ENCODE measurements at regions of chrX and their contacts with region 1.

Region 1: GRCh38 chrX:48648336-48648751 is 35.3 kb upstream of the WAS start:
- DNase-seq: peak in 33 of 35 experiments; percentile 1 to 68 (median 22)
- ATAC-seq: peak in 3 of 4 experiments; percentile 60 to 78 (median 75)
- H3K4me3 ChIP-seq: no peak overlapping the region
- H3K4me3 Mint-ChIP-seq: no peak overlapping the region
- H3K27ac ChIP-seq: no peak overlapping the region
- H3K27ac Mint-ChIP-seq: peak overlapping the region; percentile 74
- H3K4me1 ChIP-seq: no peaks in the 10 kb centered on the region
- H3K4me1 Mint-ChIP-seq: peaks cover 0 to 11% (median 6%) of the 10 kb centered on the region in 3 donors
- H3K27me3 ChIP-seq: no peaks in the 10 kb centered on the region
- H3K27me3 Mint-ChIP-seq: no peaks in the 10 kb centered on the region

Region 2: DNA sequence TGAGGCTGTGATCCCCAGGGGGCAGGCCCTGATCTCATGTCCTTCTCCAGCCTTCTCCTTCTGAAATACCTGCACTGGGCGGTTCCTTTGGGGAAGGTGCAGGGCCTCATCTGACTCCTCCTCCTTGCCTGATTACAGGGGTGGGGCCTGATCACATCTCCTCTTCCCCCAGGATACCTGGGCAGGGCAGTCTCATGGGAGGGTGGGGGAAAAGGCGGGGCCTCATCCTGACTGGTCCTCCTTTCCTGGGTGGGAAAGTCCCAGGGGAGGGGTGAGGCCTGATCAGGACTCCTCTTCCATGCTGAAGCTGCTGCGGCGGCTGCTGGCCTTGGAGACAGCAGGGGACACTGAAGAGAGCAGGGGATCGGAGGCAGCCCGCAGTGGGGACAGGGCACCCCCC is 381.5 kb after region 1 on chrX:
- CTCF ChIA-PET with region 1: no interaction called
- POLR2A ChIA-PET with region 1: interaction called in 1 of 2 experiments, 10 read pairs
- DNase-seq: no peak
- ATAC-seq: no peak
- H3K4me3 ChIP-seq: no peak overlapping the region
- H3K4me3 Mint-ChIP-seq: no peak overlapping the region
- H3K27ac ChIP-seq: no peak overlapping the region
- H3K27ac Mint-ChIP-seq: no peak overlapping the region
- H3K4me1 ChIP-seq: no peaks in the 10 kb centered on the region
- H3K4me1 Mint-ChIP-seq: no peaks in the 10 kb centered on the region
- H3K27me3 ChIP-seq: no peaks in the 10 kb centered on the region
- H3K27me3 Mint-ChIP-seq: peaks cover 0 to 4% of the 10 kb centered on the region in 2 donors